ENCODE measurements at regions of chr2 and their contacts with region 1.

Region 1: GRCh38 chr2:152879275-152879674 is 160.9 kb downstream of the ARL6IP6 start:
- DNase-seq: no peak
- ATAC-seq: no peak
- H3K4me3 ChIP-seq: no peak overlapping the region
- H3K4me3 Mint-ChIP-seq: no peak overlapping the region
- H3K27ac ChIP-seq: no peak overlapping the region
- H3K27ac Mint-ChIP-seq: no peak overlapping the region
- H3K4me1 ChIP-seq: no peaks in the 10 kb centered on the region
- H3K4me1 Mint-ChIP-seq: no peaks in the 10 kb centered on the region
- H3K27me3 ChIP-seq: no peaks in the 10 kb centered on the region
- H3K27me3 Mint-ChIP-seq: peaks cover 8% of the 10 kb centered on the region
- CTCF ChIP-seq: no peak

Region 2: GRCh38 chr2:152890736-152891135 is 11.5 kb after region 1 on chr2:
- CTCF ChIA-PET with region 1: no interaction called
- POLR2A ChIA-PET with region 1: no interaction called
- intact Hi-C with region 1: loop called in 1 of 2 experiments (anchors 1 kb)
- DNase-seq: no peak
- ATAC-seq: no peak
- H3K4me3 ChIP-seq: no peak overlapping the region
- H3K4me3 Mint-ChIP-seq: no peak overlapping the region
- H3K27ac ChIP-seq: no peak overlapping the region
- H3K27ac Mint-ChIP-seq: no peak overlapping the region
- H3K4me1 ChIP-seq: no peaks in the 10 kb centered on the region
- H3K4me1 Mint-ChIP-seq: no peaks in the 10 kb centered on the region
- H3K27me3 ChIP-seq: peaks cover 0 to under 1% of the 10 kb centered on the region in 2 experiments
- H3K27me3 Mint-ChIP-seq: peaks cover 15% of the 10 kb centered on the region
- CTCF ChIP-seq: no peak